B cell (primary cell): ENCODE measurements at regions of chr19 and their contacts with region 1.

Region 1: DNA sequence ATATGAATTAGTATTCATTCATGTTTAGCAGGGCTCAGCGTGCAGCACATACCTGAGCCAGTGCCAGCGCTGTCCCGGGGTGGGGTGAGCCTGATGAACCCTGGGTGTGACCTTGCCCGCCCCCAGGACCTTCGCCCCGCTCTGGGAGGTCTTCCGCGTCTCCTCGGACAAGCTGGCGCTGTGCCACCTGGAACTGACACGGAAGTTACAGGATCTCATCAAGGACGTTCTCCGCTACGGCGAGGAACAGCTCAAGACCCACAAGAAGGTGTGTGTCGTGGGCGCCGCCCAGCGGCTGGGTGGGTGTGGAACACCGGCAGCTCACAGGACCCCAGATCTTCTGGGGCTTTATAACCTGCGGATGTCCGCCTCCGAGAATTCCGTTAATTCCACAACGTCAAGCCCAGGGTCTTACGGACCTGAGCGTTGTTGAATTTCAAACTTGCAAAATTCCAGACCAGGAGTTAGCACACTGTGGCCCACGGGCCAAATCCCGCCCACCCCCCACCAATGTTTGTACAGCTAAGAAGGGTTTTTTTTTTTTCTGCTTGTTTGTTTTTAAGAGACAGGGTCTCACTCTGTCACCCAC is 15.4 kb downstream of the FCHO1 start:
- DNase-seq: peak; percentile 74
- ATAC-seq: peak; percentile 62
- H3K4me3 ChIP-seq: no peak overlapping the region
- H3K4me3 Mint-ChIP-seq: peak overlapping the region; percentile 29
- H3K27ac ChIP-seq: no peak overlapping the region
- H3K27ac Mint-ChIP-seq: peak overlapping the region; percentile 72
- H3K4me1 ChIP-seq: peaks cover 4 to 12% of the 10 kb centered on the region in 2 donors
- H3K4me1 Mint-ChIP-seq: peaks cover 20% of the 10 kb centered on the region
- H3K27me3 ChIP-seq: no peaks in the 10 kb centered on the region
- H3K27me3 Mint-ChIP-seq: no peaks in the 10 kb centered on the region
- CTCF ChIP-seq: peak; percentile 78

Region 2: DNA sequence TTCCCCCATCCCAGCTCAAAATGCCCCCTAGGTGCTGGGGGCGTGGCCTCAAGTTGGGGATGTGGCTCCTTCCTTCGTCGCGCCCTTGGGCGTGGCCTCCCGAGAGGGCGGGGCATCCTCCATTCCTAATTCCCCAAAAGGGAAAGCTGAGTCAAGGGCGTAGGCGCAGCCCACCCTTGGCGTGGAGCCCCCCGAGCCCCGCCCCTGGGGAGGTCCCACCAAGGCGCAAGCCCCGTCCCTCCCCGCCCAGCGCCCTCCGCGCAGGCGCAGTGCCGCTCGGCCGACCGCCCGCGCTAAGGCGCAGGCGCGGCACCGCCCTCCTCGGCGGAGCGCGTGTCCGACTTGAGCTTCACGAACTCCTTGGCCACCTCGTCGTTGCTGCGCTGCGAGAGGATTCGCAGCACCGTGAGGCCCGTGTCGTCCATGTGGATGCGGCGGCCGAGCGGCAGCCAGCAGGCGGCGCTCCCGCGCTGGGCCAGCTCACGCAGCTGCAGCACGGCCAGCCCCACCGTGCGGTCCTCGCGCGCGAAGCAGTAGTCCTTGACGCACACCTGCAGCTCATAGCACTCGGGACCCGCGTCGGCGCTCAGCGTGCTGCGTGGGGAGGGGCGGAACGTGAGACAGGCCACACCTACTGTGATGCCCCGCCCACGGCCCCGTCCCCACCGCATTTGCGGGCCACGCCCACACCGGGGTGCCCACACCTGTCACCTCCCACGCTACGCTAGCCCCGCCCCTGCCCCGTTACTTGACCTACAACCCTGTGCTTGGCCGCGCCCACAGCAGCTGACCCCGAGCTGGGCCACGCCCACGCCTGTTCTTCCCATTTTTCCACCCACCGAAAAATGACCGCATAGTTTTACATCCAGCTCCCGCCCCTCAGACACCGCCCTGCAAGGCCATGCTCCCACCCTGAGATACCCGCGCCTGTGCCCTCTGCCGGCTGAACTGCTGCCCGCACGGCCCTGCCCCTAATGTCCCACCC is 160.6 kb before region 1 on chr19:
- CTCF ChIA-PET with region 1: interaction called, 15 read pairs
- POLR2A ChIA-PET with region 1: no interaction called
- intact Hi-C with region 1: no loop called
- DNase-seq: peak; percentile 96
- ATAC-seq: peak; percentile 90
- H3K4me3 ChIP-seq: peak overlapping the region in 4 of 5 experiments; percentile 33 to 60 (median 46)
- H3K4me3 Mint-ChIP-seq: peak overlapping the region; percentile 85
- H3K27ac ChIP-seq: peak overlapping the region; percentile 18 to 44
- H3K27ac Mint-ChIP-seq: peak overlapping the region; percentile 72
- H3K4me1 ChIP-seq: peaks cover 11 to 12% of the 10 kb centered on the region in 2 donors
- H3K4me1 Mint-ChIP-seq: peaks cover 22% of the 10 kb centered on the region
- H3K27me3 ChIP-seq: peaks cover 0 to 33% (median 10%) of the 10 kb centered on the region in 4 experiments
- H3K27me3 Mint-ChIP-seq: peaks cover 32% of the 10 kb centered on the region
- CTCF ChIP-seq: peak; percentile 94

Region 3: GRCh38 chr19:17718947-17719711 is 47.5 kb before region 1 on chr19 and contains the start of gene MAP1S:
- CTCF ChIA-PET with region 1: interaction called, 16 read pairs
- POLR2A ChIA-PET with region 1: no interaction called
- intact Hi-C with region 1: no loop called
- DNase-seq: peak; percentile 72
- ATAC-seq: peak; percentile 93
- H3K4me3 ChIP-seq: peak within 1 kb of the TSS; percentile 78 to 94 (median 88)
- H3K4me3 Mint-ChIP-seq: peak within 1 kb of the TSS; percentile 92
- H3K27ac ChIP-seq: peak within 1 kb of the TSS; percentile 27 to 73
- H3K27ac Mint-ChIP-seq: peak within 1 kb of the TSS; percentile 82
- H3K4me1 ChIP-seq: peaks cover 32 to 39% of the 10 kb centered on the region in 2 donors
- H3K4me1 Mint-ChIP-seq: peaks cover 36% of the 10 kb centered on the region
- H3K27me3 ChIP-seq: no peaks in the 10 kb centered on the region
- H3K27me3 Mint-ChIP-seq: no peaks in the 10 kb centered on the region
- CTCF ChIP-seq: no peak
- total RNA-seq, gene MAP1S: 81.6 and 83.0 TPM in 2 replicates

Region 4: GRCh38 chr19:17739121-17739875 is 27.3 kb before region 1 on chr19:
- CTCF ChIA-PET with region 1: interaction called, 12 read pairs
- POLR2A ChIA-PET with region 1: interaction called, 6 read pairs
- intact Hi-C with region 1: no loop called
- DNase-seq: peak; percentile 73
- ATAC-seq: peak; percentile 79
- H3K4me3 ChIP-seq: peak overlapping the region in 1 of 5 experiments; percentile 4
- H3K4me3 Mint-ChIP-seq: peak overlapping the region; percentile 85
- H3K27ac ChIP-seq: peak overlapping the region; percentile 50 to 67
- H3K27ac Mint-ChIP-seq: peak overlapping the region; percentile 90
- H3K4me1 ChIP-seq: peaks cover 22 to 37% of the 10 kb centered on the region in 2 donors
- H3K4me1 Mint-ChIP-seq: peaks cover 42% of the 10 kb centered on the region
- H3K27me3 ChIP-seq: no peaks in the 10 kb centered on the region
- H3K27me3 Mint-ChIP-seq: no peaks in the 10 kb centered on the region
- CTCF ChIP-seq: no peak

Region 5: DNA sequence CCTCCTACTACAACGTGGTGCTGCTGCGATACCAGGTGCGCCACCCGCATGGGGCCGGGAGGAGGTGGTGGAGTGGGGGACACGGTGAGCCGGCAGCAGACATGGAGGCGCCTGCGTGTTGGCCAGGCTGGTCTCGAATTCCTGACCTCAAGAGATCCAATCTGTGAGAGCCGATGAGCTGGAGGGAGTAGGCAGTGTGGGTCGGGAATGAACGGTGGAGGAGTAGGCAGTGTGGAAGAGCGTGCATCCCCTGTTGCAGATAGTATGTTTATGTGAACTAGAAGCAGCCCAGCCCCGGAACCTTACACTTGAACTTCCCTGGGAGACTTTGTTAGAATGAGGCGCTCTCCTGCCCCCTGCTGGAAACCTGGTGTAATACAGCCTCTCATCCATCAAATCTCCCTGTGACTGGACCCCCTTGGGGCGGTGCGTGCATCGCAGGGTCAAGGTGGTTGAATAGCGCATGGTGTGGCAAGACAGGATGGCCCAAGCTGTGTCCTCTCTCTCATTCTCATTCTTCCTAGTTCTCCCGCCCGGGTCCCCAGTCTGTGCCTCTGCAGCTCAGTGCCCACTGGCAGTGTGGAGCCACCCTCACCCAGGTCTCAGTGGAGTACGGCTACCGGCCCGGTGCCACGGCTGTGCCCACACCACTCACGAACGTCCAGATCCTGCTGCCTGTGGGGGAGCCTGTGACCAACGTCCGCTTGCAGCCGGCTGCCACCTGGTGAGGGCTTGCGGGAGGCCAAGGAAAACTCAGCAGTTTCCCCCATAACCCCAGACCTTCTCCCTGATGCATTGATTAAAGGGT is 17.8 kb after region 1 on chr19:
- CTCF ChIA-PET with region 1: interaction called, 24 read pairs
- POLR2A ChIA-PET with region 1: interaction called, 5 read pairs
- intact Hi-C with region 1: loop called (anchors 1 kb)
- DNase-seq: peak; percentile 83
- ATAC-seq: peak; percentile 86
- H3K4me3 ChIP-seq: no peak overlapping the region
- H3K4me3 Mint-ChIP-seq: no peak overlapping the region
- H3K27ac ChIP-seq: no peak overlapping the region
- H3K27ac Mint-ChIP-seq: peak overlapping the region; percentile 51
- H3K4me1 ChIP-seq: peaks cover 0 to 6% of the 10 kb centered on the region in 2 donors
- H3K4me1 Mint-ChIP-seq: peaks cover 5% of the 10 kb centered on the region
- H3K27me3 ChIP-seq: no peaks in the 10 kb centered on the region
- H3K27me3 Mint-ChIP-seq: no peaks in the 10 kb centered on the region
- CTCF ChIP-seq: peak; percentile 85

Region 6: DNA sequence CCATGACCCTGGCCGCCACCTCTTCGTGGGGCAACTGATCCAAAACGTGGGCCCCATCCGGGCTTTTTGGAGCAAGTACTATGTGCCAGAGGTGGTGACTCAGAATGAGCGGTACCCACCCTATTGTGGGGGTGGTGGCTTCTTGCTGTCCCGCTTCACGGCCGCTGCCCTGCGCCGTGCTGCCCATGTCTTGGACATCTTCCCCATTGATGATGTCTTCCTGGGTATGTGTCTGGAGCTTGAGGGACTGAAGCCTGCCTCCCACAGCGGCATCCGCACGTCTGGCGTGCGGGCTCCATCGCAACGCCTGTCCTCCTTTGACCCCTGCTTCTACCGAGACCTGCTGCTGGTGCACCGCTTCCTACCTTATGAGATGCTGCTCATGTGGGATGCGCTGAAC is 45.0 kb after region 1 on chr19:
- CTCF ChIA-PET with region 1: no interaction called
- POLR2A ChIA-PET with region 1: no interaction called
- intact Hi-C with region 1: no loop called
- DNase-seq: no peak
- ATAC-seq: no peak
- H3K4me3 ChIP-seq: no peak overlapping the region
- H3K4me3 Mint-ChIP-seq: no peak overlapping the region
- H3K27ac ChIP-seq: no peak overlapping the region
- H3K27ac Mint-ChIP-seq: no peak overlapping the region
- H3K4me1 ChIP-seq: peaks cover 0 to 9% of the 10 kb centered on the region in 2 donors
- H3K4me1 Mint-ChIP-seq: peaks cover 5% of the 10 kb centered on the region
- H3K27me3 ChIP-seq: peaks cover 0 to 15% (median 4%) of the 10 kb centered on the region in 4 experiments
- H3K27me3 Mint-ChIP-seq: peaks cover 9% of the 10 kb centered on the region
- CTCF ChIP-seq: no peak